ENCODE measurements at regions of chr7 and their contacts with region 1.

Region 1: GRCh38 chr7:87886875-87887274 is 10.6 kb downstream of the DBF4 start:
- DNase-seq: no peak
- H3K4me3 ChIP-seq: no peak overlapping the region
- H3K27ac ChIP-seq: no peak overlapping the region
- H3K4me1 ChIP-seq: no peaks in the 10 kb centered on the region
- H3K27me3 ChIP-seq: no peaks in the 10 kb centered on the region
- CTCF ChIP-seq: peak in 4 of 6 experiments; percentile 23 to 63 (median 50)
- POLR2A ChIP-seq: no peak

Region 2: GRCh38 chr7:87797798-87798403 is 89.0 kb before region 1 on chr7:
- intact Hi-C with region 1: loop called (anchors 5 kb)
- DNase-seq: no peak
- H3K4me3 ChIP-seq: no peak overlapping the region
- H3K27ac ChIP-seq: no peak overlapping the region
- H3K4me1 ChIP-seq: no peaks in the 10 kb centered on the region
- H3K27me3 ChIP-seq: no peaks in the 10 kb centered on the region
- CTCF ChIP-seq: peak; percentile 20 to 77 (median 47)
- POLR2A ChIP-seq: no peak

Measured in thyroid gland (tissue), 4 donors.